ENCODE measurements at regions of chr15 and their contacts with region 1.

Region 1: GRCh38 chr15:23565395-23566070 is at the start of gene MKRN3:
- DNase-seq: peak; percentile 44
- ATAC-seq: peak; percentile 71
- H3K4me3 ChIP-seq: peak within 1 kb of the TSS; percentile 60 to 76 (median 65)
- H3K27ac ChIP-seq: peak within 1 kb of the TSS; percentile 85
- H3K4me1 ChIP-seq: peaks cover 12% of the 10 kb centered on the region
- H3K27me3 ChIP-seq: no peaks in the 10 kb centered on the region; a peak in 1 of 5 replicates
- CTCF ChIP-seq: no peak
- EP300 ChIP-seq: no peak
- POLR2A ChIP-seq: peak in 1 of 2 experiments; percentile 39; a peak in 1 of 4 replicates
- RAD21 ChIP-seq: no peak
- total RNA-seq, gene MKRN3: 4.6 and 5.2 TPM in 2 replicates

Region 2: GRCh38 chr15:23503576-23503975 is 62.0 kb before region 1 on chr15:
- CTCF ChIA-PET with region 1: no interaction called
- POLR2A ChIA-PET with region 1: no interaction called
- in situ Hi-C with region 1: loop called (anchors 10 kb)
- intact Hi-C with region 1: no loop called
- DNase-seq: no peak
- ATAC-seq: no peak
- H3K4me3 ChIP-seq: no peak overlapping the region
- H3K27ac ChIP-seq: no peak overlapping the region
- H3K4me1 ChIP-seq: no peaks in the 10 kb centered on the region
- H3K27me3 ChIP-seq: no peaks in the 10 kb centered on the region
- CTCF ChIP-seq: no peak
- EP300 ChIP-seq: no peak
- POLR2A ChIP-seq: no peak
- RAD21 ChIP-seq: no peak

Measured in HepG2 (cell line).